ENCODE measurements at regions of chr5 and their contacts with region 1.

Region 1: DNA sequence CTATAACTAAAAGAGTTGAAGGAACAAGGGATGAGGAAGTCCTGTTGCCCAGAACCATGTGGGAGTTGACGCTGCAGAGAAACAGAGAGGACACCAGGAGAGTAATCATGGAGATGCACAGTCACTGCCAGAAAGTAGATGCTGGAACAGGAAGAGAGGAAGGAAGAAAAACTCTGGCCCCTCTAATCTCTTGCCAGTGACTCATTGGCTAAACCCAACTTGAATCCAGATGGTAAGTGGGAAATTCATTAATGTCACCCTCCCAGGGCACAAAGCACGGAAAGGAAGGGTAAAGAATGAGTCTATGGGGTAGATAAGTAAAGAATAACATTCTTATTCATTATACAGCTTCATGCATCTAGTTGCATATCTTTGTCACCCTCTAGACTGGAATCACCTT is 631.9 kb downstream of the PRELID2 start:
- DNase-seq: no peak
- H3K4me3 ChIP-seq: no peak overlapping the region
- H3K27ac ChIP-seq: no peak overlapping the region
- H3K4me1 ChIP-seq: no peaks in the 10 kb centered on the region
- CTCF ChIP-seq: no peak

Region 2: DNA sequence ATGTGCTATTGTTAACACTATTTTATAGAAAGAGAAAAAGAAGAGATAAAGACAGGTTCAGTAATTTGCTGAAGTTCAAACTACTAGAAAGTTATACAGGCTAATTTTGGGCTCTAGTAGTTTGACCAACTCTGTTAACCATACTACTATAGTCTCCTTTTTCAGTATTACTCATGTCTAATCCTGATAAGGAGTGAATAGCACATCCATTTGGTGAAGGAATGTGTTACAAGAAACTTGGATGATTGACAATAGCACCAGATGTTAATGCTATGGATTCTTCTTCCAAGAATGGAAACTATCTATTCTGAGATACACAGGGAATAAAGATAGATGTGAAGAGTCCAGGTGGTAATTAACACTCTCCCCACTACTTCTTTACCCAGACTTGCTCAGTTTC is 45.4 kb before region 1 on chr5:
- CTCF ChIA-PET with region 1: no interaction called
- POLR2A ChIA-PET with region 1: no interaction called
- intact Hi-C with region 1: loop called (anchors 1 kb)
- DNase-seq: no peak
- H3K4me3 ChIP-seq: no peak overlapping the region
- H3K27ac ChIP-seq: no peak overlapping the region
- H3K4me1 ChIP-seq: no peaks in the 10 kb centered on the region
- CTCF ChIP-seq: no peak